ENCODE measurements at regions of chr13 and their contacts with region 1.

Region 1: GRCh38 chr13:21603531-21604448 is at the start of gene MICU2:
- DNase-seq: peak; percentile 93
- ATAC-seq: peak; percentile 94
- H3K4me3 Mint-ChIP-seq: peak within 1 kb of the TSS; percentile 88
- H3K27ac Mint-ChIP-seq: peak within 1 kb of the TSS; percentile 89
- H3K4me1 Mint-ChIP-seq: peaks cover 31% of the 10 kb centered on the region
- H3K27me3 Mint-ChIP-seq: peaks cover 16% of the 10 kb centered on the region
- CTCF ChIP-seq: no peak
- total RNA-seq, gene MICU2: 37.0 and 41.3 TPM in 2 replicates

Region 2: GRCh38 chr13:20902438-20903163 is 701.2 kb before region 1 on chr13 and contains the start of gene XPO4:
- CTCF ChIA-PET with region 1: no interaction called
- POLR2A ChIA-PET with region 1: interaction called, 19 read pairs
- intact Hi-C with region 1: loop called (anchors 2 kb)
- DNase-seq: peak; percentile 80
- ATAC-seq: peak; percentile 93
- H3K4me3 Mint-ChIP-seq: peak within 1 kb of the TSS; percentile 91
- H3K27ac Mint-ChIP-seq: peak within 1 kb of the TSS; percentile 86
- H3K4me1 Mint-ChIP-seq: peaks cover 32% of the 10 kb centered on the region
- H3K27me3 Mint-ChIP-seq: peaks cover 2% of the 10 kb centered on the region
- CTCF ChIP-seq: no peak
- total RNA-seq, gene XPO4: 25.2 and 27.4 TPM in 2 replicates

Region 3: GRCh38 chr13:21395953-21396352 is 207.8 kb before region 1 on chr13:
- CTCF ChIA-PET with region 1: no interaction called
- POLR2A ChIA-PET with region 1: interaction called, 17 read pairs
- intact Hi-C with region 1: no loop called
- DNase-seq: no peak
- ATAC-seq: no peak
- H3K4me3 Mint-ChIP-seq: no peak overlapping the region
- H3K27ac Mint-ChIP-seq: peak overlapping the region; percentile 3
- H3K4me1 Mint-ChIP-seq: no peaks in the 10 kb centered on the region
- H3K27me3 Mint-ChIP-seq: no peaks in the 10 kb centered on the region
- CTCF ChIP-seq: no peak

Region 4: GRCh38 chr13:21579754-21580316 is 24.0 kb before region 1 on chr13:
- CTCF ChIA-PET with region 1: no interaction called
- POLR2A ChIA-PET with region 1: interaction called, 11 read pairs
- intact Hi-C with region 1: no loop called
- DNase-seq: no peak
- ATAC-seq: no peak
- H3K4me3 Mint-ChIP-seq: no peak overlapping the region
- H3K27ac Mint-ChIP-seq: no peak overlapping the region
- H3K4me1 Mint-ChIP-seq: peaks cover 30% of the 10 kb centered on the region
- H3K27me3 Mint-ChIP-seq: no peaks in the 10 kb centered on the region
- CTCF ChIP-seq: no peak

Region 5: GRCh38 chr13:22114630-22115311 is 511.0 kb after region 1 on chr13:
- CTCF ChIA-PET with region 1: no interaction called
- POLR2A ChIA-PET with region 1: interaction called, 3 read pairs
- intact Hi-C with region 1: loop called (anchors 1 kb)
- DNase-seq: no peak
- ATAC-seq: peak; percentile 80
- H3K4me3 Mint-ChIP-seq: peak overlapping the region; percentile 77
- H3K27ac Mint-ChIP-seq: peak overlapping the region; percentile 92
- H3K4me1 Mint-ChIP-seq: peaks cover 55% of the 10 kb centered on the region
- H3K27me3 Mint-ChIP-seq: no peaks in the 10 kb centered on the region
- CTCF ChIP-seq: no peak

Region 6: GRCh38 chr13:23146811-23147625 is 1543.2 kb after region 1 on chr13:
- CTCF ChIA-PET with region 1: no interaction called
- POLR2A ChIA-PET with region 1: no interaction called
- intact Hi-C with region 1: no loop called
- DNase-seq: no peak
- ATAC-seq: no peak
- H3K4me3 Mint-ChIP-seq: no peak overlapping the region
- H3K27ac Mint-ChIP-seq: no peak overlapping the region
- H3K4me1 Mint-ChIP-seq: no peaks in the 10 kb centered on the region
- H3K27me3 Mint-ChIP-seq: peaks cover 2% of the 10 kb centered on the region
- CTCF ChIP-seq: no peak

Measured in activated B cell treated with CpG ODN at 0.5 μM for 24 hours (primary cell).